ENCODE measurements at regions of chr7 and their contacts with region 1.

Region 1: DNA sequence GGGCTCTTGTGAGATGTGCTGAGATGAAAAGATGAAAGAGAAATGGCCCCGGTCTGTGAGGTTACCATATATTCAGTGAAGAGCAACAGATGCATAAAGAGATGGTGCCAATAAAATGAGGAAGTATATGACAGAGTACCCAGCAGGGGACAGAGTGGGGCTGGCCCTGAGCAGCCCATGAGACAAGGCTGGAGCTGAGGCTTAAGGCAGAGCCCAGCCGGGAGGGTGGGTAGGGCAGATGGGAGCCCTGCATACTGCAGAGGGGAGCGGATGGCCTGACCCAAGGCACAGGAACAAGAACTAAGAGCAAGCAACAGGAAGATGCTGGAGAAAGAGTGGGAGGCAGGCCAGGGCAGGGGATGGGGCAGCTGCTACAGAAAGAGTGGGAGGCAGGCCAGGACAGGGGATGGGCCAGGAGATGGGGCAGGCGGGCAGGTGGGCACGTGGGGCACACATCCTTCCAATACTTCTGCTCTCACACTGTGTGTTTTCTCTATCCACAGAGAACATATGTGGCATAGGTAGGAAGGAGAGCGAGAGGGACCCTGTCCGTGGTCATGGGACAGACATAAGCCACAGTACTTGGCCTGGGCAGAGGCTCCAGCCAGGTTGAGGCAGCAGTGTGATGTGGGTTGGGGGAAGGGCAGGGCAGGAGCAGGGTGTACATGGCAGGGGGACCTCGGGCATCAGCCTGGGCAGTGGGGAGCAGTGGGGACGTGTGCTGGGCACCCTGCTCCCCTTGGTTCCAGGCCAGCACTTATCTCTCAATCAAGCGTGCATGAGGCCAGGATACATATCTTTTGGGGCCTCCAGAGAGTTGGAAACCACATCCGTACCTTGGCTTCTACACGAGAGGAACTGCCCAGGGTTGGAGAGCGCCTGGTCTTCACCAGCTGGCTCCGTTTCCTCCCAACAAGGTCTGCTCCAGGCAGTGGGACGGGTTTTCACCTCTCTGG is 91.6 kb upstream of the IKZF1 start:
- DNase-seq: peak; percentile 68
- ATAC-seq: peak; percentile 66
- H3K4me3 Mint-ChIP-seq: peak overlapping the region; percentile 9
- H3K27ac Mint-ChIP-seq: peak overlapping the region; percentile 94
- H3K4me1 Mint-ChIP-seq: peaks cover 99% of the 10 kb centered on the region
- H3K27me3 Mint-ChIP-seq: no peaks in the 10 kb centered on the region

Region 2: DNA sequence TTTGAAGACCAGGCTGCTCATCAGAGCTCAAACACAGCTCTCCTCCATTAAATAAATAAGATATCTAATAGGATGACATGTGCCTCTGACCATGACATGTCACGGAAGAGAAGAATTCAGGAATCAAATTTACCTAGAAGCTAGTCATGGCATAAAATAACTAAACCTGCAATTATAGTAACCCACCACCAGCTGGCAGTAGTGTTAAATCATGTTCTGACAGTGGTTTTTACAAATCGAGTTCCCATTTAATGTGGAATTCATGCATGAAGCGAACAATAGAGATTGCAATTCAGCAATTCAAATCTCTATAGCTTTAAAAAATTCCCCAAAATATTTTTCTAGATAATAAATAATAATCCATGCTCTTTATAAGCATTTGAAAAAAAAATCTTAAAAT is 17.0 kb after region 1 on chr7:
- CTCF ChIA-PET with region 1: interaction called, 16 read pairs
- POLR2A ChIA-PET with region 1: interaction called, 7 read pairs
- DNase-seq: no peak
- ATAC-seq: no peak
- H3K4me3 Mint-ChIP-seq: no peak overlapping the region
- H3K27ac Mint-ChIP-seq: no peak overlapping the region
- H3K4me1 Mint-ChIP-seq: peaks cover 51% of the 10 kb centered on the region
- H3K27me3 Mint-ChIP-seq: no peaks in the 10 kb centered on the region